ENCODE measurements at regions of chr3 and their contacts with region 1.

Region 1: GRCh38 chr3:49093853-49094767 is at the start of gene QRICH1:
- DNase-seq: peak; percentile 96
- H3K4me3 Mint-ChIP-seq: peak within 1 kb of the TSS; percentile 83
- H3K27ac Mint-ChIP-seq: peak within 1 kb of the TSS; percentile 91
- H3K4me1 Mint-ChIP-seq: peaks cover 24% of the 10 kb centered on the region
- H3K27me3 Mint-ChIP-seq: no peaks in the 10 kb centered on the region
- total RNA-seq, gene QRICH1: 145 and 164 TPM in 2 replicates

Region 2: DNA sequence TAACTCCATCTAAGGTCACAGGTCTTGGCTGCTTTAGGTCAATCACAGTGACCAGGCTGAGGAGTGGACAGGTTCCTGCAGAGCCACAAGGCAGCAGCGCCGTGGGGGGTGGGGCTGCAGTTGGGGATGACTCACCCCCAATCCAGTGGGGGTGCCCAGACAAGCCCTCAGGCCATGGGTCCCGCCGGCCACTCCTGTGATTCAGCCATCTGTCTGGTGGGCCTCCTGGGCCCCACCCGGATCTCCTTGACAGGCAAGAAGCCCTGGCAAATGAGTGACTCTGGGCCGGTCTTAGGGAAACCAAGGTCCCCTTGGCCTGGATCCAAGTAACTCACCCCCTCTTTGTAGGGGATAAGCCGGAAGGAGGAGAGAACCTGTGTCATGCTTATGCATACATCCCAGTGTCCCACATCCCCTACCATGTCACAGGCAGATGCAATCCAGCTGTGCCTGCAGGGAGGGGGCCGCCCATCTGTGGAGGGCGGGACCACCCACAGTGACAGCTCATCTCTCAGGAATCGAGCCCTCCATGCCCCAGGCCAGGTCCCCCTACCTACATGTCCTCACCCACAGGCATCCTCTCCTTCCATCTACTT is 498.5 kb before region 1 on chr3:
- intact Hi-C with region 1: no loop called
- DNase-seq: no peak
- H3K4me3 Mint-ChIP-seq: no peak overlapping the region
- H3K27ac Mint-ChIP-seq: no peak overlapping the region
- H3K4me1 Mint-ChIP-seq: no peaks in the 10 kb centered on the region
- H3K27me3 Mint-ChIP-seq: peaks cover 12% of the 10 kb centered on the region

Region 3: GRCh38 chr3:49007068-49007770 is 86.9 kb before region 1 on chr3 and contains the start of gene WDR6:
- intact Hi-C with region 1: loop called (anchors 1 kb)
- DNase-seq: peak; percentile 96
- H3K4me3 Mint-ChIP-seq: peak within 1 kb of the TSS; percentile 98
- H3K27ac Mint-ChIP-seq: peak within 1 kb of the TSS; percentile 99
- H3K4me1 Mint-ChIP-seq: peaks cover 15% of the 10 kb centered on the region
- H3K27me3 Mint-ChIP-seq: no peaks in the 10 kb centered on the region
- total RNA-seq, gene WDR6: 161 and 167 TPM in 2 replicates

Region 4: DNA sequence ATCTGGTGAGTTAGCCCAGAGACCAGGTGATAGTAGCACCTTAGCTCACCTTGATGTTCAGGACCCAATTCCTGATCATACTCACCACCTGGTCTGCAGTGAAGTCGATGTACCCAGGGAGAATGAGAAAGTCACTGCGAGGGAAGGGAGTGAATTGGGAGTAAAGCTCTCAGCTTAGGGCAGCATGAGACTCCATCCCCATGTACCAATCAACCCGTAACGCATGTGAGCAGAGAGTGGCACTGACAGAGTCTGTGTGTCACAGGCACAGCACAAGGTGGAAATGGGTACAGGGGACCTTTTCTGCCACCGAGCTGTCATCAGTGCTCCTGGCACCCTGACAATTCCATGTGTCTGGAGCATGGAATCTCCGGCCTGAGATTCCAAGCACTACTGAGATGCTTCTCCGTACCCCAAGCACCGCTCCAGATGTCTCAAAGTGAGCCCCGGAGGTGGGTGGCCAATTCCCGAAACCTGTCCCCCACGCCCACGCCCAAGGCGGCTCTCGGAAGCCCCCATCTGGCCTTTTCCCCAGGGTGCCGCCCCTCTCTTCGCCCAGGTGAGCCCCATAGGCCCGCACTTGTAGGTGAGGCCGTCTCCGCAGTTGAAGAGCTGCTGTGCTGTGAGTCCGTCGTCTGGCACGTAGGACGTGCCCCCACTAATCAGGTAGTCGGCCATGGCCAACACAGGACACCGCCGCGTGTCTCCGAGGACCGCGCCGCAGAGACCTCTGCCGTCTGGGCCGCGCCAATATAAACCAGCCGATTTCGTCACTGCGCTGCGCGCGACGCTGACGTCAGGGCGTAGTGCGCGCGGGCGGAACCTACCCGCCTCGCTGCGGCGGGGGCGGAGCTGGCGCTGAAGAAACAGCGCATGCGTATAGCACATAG is 65.2 kb before region 1 on chr3 and contains the start of gene IMPDH2:
- intact Hi-C with region 1: loop called (anchors 2 kb)
- DNase-seq: peak; percentile 91
- H3K4me3 Mint-ChIP-seq: peak within 1 kb of the TSS; percentile 90
- H3K27ac Mint-ChIP-seq: peak within 1 kb of the TSS; percentile 94
- H3K4me1 Mint-ChIP-seq: peaks cover 34% of the 10 kb centered on the region
- H3K27me3 Mint-ChIP-seq: no peaks in the 10 kb centered on the region
- total RNA-seq, gene IMPDH2: 412 and 416 TPM in 2 replicates

Region 5: GRCh38 chr3:49120438-49121131 is 26.5 kb after region 1 on chr3 and contains the start of gene USP19:
- intact Hi-C with region 1: loop called (anchors 1 kb)
- DNase-seq: peak; percentile 93
- H3K4me3 Mint-ChIP-seq: peak within 1 kb of the TSS; percentile 88
- H3K27ac Mint-ChIP-seq: peak within 1 kb of the TSS; percentile 80
- H3K4me1 Mint-ChIP-seq: peaks cover 11% of the 10 kb centered on the region
- H3K27me3 Mint-ChIP-seq: no peaks in the 10 kb centered on the region
- total RNA-seq, gene USP19: 47.9 and 54.8 TPM in 2 replicates

Region 6: GRCh38 chr3:49358217-49358883 is 264.2 kb after region 1 on chr3 and contains the start of gene GPX1:
- intact Hi-C with region 1: no loop called
- DNase-seq: peak; percentile 82
- H3K4me3 Mint-ChIP-seq: peak within 1 kb of the TSS; percentile 97
- H3K27ac Mint-ChIP-seq: peak within 1 kb of the TSS; percentile 88
- H3K4me1 Mint-ChIP-seq: peaks cover 17% of the 10 kb centered on the region
- H3K27me3 Mint-ChIP-seq: no peaks in the 10 kb centered on the region
- total RNA-seq, gene GPX1: 168 and 173 TPM in 2 replicates

Region 7: GRCh38 chr3:49411968-49412631 is 318.0 kb after region 1 on chr3 and contains the starts of genes RHOA and TCTA:
- intact Hi-C with region 1: loop called (anchors 1 kb)
- DNase-seq: peak; percentile 99
- H3K4me3 Mint-ChIP-seq: peak within 1 kb of the TSS; percentile 93
- H3K27ac Mint-ChIP-seq: peak within 1 kb of the TSS; percentile 90
- H3K4me1 Mint-ChIP-seq: peaks cover 54% of the 10 kb centered on the region
- H3K27me3 Mint-ChIP-seq: no peaks in the 10 kb centered on the region
- total RNA-seq, gene RHOA: 425 and 428 TPM in 2 replicates
- total RNA-seq, gene TCTA: 18.9 and 19.4 TPM in 2 replicates